Left ventricle myocardium superior (tissue), 1 donor: ENCODE measurements at regions of chr22 and their contacts with region 1.

Region 1: DNA sequence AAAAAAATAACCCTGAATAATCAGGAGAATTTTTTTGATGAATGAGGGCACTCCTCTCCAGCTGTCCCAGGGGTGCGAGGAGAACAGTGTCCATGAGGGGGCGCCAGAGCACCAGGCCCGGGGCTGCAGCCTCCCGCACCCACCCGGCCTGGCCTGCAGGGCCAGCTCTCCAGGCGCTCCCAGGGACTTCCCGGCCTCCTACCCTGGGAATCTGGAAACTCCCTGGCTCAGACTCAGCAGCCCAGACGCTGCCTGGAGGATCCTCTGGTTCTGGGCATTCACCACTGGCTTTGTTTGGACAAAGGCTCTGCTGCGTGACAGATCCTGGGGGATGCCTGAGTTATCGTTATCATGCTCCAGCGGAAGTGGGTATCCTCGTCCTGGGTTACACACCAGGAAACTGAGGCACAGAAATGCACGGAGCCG is 31.0 kb downstream of the MCM5 start:
- DNase-seq: peak; percentile 93
- ATAC-seq: peak; percentile 98

Region 2: GRCh38 chr22:34960005-34960404 is 470.9 kb before region 1 on chr22:
- intact Hi-C with region 1: no loop called
- DNase-seq: no peak
- ATAC-seq: no peak

Region 3: GRCh38 chr22:35477911-35478582 is 47.1 kb after region 1 on chr22:
- intact Hi-C with region 1: no loop called
- DNase-seq: peak; percentile 62
- ATAC-seq: peak; percentile 68

Region 4: GRCh38 chr22:35582861-35583670 is 152.2 kb after region 1 on chr22:
- intact Hi-C with region 1: loop called (anchors 2 kb)
- DNase-seq: peak; percentile 63
- ATAC-seq: peak; percentile 38

Region 5: DNA sequence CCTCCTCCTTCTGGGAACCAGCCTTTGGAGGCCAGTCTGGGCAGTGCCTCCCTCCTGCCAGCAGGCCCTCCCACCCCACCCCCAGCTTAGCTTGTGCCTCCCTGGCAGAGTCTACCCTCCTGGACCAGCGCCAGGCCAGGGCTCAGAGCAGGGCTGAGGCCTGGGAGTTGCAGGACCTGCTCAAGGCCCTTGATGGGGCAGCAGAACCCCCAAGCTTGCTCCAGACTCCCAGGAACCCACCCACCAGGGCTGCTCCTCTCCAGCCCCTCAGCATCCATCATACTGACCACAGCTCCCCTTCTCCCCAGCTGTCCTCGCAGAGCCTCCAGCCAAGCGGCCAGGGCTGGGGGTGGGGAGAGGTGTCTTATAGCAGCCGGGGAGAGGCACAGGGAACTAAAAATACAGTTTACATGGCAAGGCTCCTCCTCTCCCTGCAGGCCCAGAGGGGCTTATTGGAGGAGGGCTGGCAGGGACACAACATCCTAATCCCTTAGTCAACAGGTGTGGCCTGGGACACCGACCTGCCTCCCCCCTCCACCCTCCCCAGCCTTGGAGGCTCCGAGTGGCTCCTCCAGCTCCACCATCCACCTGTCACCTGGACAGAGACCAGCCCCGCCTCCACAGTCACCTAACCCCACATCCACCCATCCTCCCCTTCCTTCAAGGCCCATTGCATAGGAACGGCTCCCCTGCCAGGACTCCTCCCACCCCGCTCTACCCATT is 191.4 kb after region 1 on chr22:
- intact Hi-C with region 1: loop called (anchors 5 kb)
- DNase-seq: peak; percentile 87
- ATAC-seq: peak; percentile 69